HEK293 (cell line): ENCODE measurements at regions of chr22 and their contacts with region 1.

Region 1: GRCh38 chr22:37676736-37677492 is 1.5 kb downstream of the LGALS1 start:
- H3K4me3 ChIP-seq: peak overlapping the region; percentile 39
- H3K27ac ChIP-seq: peak overlapping the region; percentile 62
- H3K4me1 ChIP-seq: peaks cover 9% of the 10 kb centered on the region
- CTCF ChIP-seq: no peak

Region 2: DNA sequence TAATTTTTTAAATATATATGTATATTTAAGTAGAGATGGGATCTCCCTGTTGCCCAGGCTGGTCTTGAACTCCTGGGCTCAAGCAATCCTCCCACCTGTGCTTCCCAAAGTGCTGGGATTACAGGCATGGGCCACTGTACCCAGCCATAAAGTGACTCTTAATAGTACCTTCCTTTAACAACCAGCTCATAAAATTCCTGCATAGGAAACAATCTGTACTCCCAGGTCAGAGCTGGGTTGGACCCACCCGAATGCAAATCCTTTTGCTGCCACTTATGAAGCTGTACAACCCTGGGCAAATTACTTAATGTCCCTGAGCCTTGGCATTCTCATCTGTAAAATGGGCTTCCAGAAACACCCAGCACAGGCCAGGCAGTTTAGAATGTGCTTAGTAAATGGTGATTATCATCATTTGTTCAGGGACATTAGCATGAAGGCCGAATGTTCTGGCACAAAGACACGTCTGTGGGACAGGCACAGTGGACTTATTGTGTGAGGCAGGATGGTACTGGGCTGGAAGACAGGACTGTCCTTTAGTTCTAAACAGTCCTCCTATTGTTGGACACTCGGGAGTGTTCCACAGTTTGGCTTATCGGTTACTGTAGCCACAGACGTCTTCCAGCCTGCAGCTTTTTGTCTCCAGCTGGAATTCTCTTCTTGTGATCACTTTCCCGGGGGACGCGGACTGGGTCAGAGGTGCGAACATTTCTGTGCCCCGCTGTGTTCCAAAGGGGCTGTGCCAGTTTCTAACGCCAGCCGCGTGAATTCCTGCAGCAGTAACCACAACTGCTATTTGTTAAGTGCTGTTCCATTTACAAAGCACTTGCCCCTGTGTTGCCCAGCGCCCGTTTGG is 12.4 kb before region 1 on chr22:
- CTCF ChIA-PET with region 1: interaction called, 87 read pairs
- POLR2A ChIA-PET with region 1: interaction called, 78 read pairs
- H3K4me3 ChIP-seq: no peak overlapping the region
- H3K27ac ChIP-seq: no peak overlapping the region
- H3K4me1 ChIP-seq: peaks cover 12% of the 10 kb centered on the region
- CTCF ChIP-seq: no peak

Region 3: GRCh38 chr22:37696657-37697537 is 20.0 kb after region 1 on chr22 and contains the start of gene TRIOBP:
- CTCF ChIA-PET with region 1: interaction called, 13 read pairs
- POLR2A ChIA-PET with region 1: interaction called, 3 read pairs
- H3K4me3 ChIP-seq: no peak within 1 kb of the TSS
- H3K27ac ChIP-seq: no peak within 1 kb of the TSS
- H3K4me1 ChIP-seq: peaks cover 6% of the 10 kb centered on the region
- CTCF ChIP-seq: peak; percentile 73

Region 4: GRCh38 chr22:37782340-37783177 is 105.6 kb after region 1 on chr22:
- CTCF ChIA-PET with region 1: no interaction called
- POLR2A ChIA-PET with region 1: no interaction called
- H3K4me3 ChIP-seq: no peak overlapping the region
- H3K27ac ChIP-seq: no peak overlapping the region
- H3K4me1 ChIP-seq: no peaks in the 10 kb centered on the region
- CTCF ChIP-seq: no peak